ENCODE measurements at regions of chr16 and their contacts with region 1.

Region 1: GRCh38 chr16:5549802-5550201 is 452.2 kb upstream of the EEF2KMT start:
- DNase-seq: no peak
- ATAC-seq: no peak
- H3K4me3 ChIP-seq: no peak overlapping the region
- H3K27ac ChIP-seq: no peak overlapping the region
- H3K4me1 ChIP-seq: no peaks in the 10 kb centered on the region
- H3K27me3 ChIP-seq: peaks cover 0 to 3% (median 0%) of the 10 kb centered on the region in 3 donors
- CTCF ChIP-seq: no peak

Region 2: DNA sequence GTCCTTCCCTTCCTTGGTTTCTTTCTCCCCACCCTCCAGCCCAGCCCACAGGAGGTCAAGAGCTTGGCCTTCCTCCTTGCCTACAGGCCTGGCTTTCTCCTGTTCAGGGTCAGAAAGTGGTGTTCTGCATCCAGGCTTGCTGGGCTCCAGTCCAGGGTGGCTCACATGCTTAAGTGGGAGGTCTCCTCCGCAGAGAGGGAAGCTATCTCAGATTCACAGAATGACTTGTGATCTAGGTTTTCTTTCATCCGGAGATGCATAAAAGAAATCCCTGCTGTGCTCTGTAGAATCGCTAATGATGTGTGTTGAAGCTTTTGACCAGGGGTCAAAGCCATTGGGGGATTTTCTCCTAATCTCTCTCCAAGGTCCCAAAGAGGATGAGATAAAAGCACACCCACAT is 69.9 kb before region 1 on chr16:
- intact Hi-C with region 1: loop called in 1 of 2 experiments (anchors 10 kb)
- DNase-seq: no peak
- ATAC-seq: no peak
- H3K4me3 ChIP-seq: no peak overlapping the region
- H3K27ac ChIP-seq: no peak overlapping the region
- H3K4me1 ChIP-seq: no peaks in the 10 kb centered on the region
- H3K27me3 ChIP-seq: no peaks in the 10 kb centered on the region
- CTCF ChIP-seq: no peak

Region 3: GRCh38 chr16:5758281-5758680 is 208.5 kb after region 1 on chr16:
- intact Hi-C with region 1: no loop called
- DNase-seq: no peak
- ATAC-seq: no peak
- H3K4me3 ChIP-seq: no peak overlapping the region
- H3K27ac ChIP-seq: no peak overlapping the region
- H3K4me1 ChIP-seq: no peaks in the 10 kb centered on the region
- H3K27me3 ChIP-seq: no peaks in the 10 kb centered on the region
- CTCF ChIP-seq: no peak

Measured in psoas muscle (tissue), 8 donors.